H1 (cell line): ENCODE measurements at regions of chr21 and their contacts with region 1.

Region 1: DNA sequence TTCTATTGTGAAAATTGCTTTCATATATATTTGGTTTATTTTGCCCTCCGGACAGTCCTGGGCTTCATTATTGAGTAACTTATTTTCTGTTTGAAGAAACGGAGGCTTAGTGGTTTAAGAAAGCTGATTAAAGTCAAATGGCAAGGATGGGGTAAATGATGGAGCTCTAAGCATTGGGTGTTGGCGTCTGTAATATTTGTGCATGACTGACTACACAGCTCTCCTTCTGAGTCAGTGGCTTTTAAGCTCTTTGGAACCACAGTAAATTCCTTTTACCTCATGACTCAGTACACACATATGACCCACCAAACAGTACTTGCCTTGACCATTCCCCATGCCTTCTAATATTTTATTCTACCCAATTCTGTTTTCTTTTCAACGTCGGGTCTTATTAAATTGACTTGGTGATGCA is 21.0 kb downstream of the B3GALT5 start:
- DNase-seq: no peak
- H3K4me3 ChIP-seq: no peak overlapping the region
- H3K27ac ChIP-seq: no peak overlapping the region
- H3K4me1 ChIP-seq: peaks cover 14 to 38% (median 29%) of the 10 kb centered on the region in 4 experiments
- H3K27me3 ChIP-seq: no peaks in the 10 kb centered on the region
- CTCF ChIP-seq: no peak
- EP300 ChIP-seq: no peak
- POLR2A ChIP-seq: no peak
- RAD21 ChIP-seq: no peak

Region 2: DNA sequence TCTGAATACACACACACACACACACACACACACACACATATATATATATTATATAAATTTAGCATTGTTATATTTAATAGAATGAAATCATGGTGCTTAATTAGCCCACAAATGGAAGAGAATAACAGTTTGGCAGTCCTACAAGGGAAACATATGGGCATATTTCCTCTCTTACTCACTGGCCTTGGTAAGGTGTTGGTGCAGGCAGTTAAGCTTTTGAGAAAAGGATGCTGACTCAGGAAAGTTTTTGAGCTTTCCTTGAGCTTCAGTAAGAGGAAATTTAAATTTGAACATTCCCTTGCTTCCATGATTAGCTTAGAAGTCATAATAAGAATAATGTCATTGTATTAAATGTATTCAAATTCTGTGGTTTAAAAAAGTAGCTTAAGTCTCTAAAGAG is 58.0 kb before region 1 on chr21:
- CTCF ChIA-PET with region 1: no interaction called
- POLR2A ChIA-PET with region 1: no interaction called
- DNase-seq: no peak
- H3K4me3 ChIP-seq: no peak overlapping the region
- H3K27ac ChIP-seq: no peak overlapping the region
- H3K4me1 ChIP-seq: peaks cover 0 to 5% (median 3%) of the 10 kb centered on the region in 4 experiments; a peak in 5 of 7 replicates
- H3K27me3 ChIP-seq: no peaks in the 10 kb centered on the region
- CTCF ChIP-seq: no peak
- EP300 ChIP-seq: no peak
- POLR2A ChIP-seq: no peak
- RAD21 ChIP-seq: no peak

Region 3: DNA sequence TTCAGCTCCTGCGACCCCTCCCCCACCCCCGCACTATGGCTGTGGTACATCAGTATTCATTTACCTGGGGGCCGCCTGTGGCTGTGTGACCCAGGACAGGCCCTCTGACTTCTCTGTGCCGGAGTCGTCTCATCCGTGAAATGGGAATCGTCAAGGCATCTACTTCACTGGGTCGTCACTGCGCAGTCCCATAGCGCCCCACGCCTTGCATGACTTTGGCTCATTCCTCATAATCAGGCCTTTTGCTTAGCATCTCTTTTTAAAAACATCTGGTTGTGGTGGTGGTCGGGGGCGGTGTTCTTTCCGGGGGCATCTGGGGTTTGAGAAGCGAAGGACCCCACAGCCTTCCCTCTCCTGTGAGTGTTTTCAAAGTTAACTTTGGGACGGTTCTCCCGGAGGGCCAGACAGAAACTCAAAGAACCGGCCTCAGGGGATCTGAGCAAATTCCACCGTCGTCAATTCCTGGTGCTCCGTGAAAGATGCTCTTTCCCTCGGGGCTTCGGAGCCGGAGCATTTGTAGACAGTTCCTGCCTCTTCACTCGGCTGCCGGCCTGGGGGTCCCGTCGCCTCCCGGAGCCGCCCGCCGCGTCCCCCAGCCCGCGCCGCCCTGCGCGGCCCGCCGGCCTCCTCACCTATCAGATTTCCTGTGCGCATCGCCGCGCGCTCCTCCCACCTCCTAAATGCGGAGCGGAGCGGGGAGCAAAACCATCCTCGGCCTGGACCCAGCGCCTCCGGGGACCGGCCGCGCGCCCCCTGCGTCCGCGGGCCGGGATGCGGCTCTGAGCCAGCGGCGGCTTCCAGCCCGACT is 21.3 kb before region 1 on chr21 and contains the start of gene B3GALT5:
- CTCF ChIA-PET with region 1: interaction called, 6 read pairs
- POLR2A ChIA-PET with region 1: interaction called, 222 read pairs
- DNase-seq: peak; percentile 33 to 80
- H3K4me3 ChIP-seq: peak within 1 kb of the TSS; percentile 58 to 90 (median 90)
- H3K27ac ChIP-seq: no peak within 1 kb of the TSS; the same call in 1 of the 2 replicates
- H3K4me1 ChIP-seq: peaks cover 10 to 28% (median 16%) of the 10 kb centered on the region in 4 experiments
- H3K27me3 ChIP-seq: no peaks in the 10 kb centered on the region
- CTCF ChIP-seq: peak in 1 of 3 experiments; percentile 32; a peak in 1 of 4 replicates
- EP300 ChIP-seq: no peak
- POLR2A ChIP-seq: no peak; a peak in 1 of 3 replicates
- RAD21 ChIP-seq: peak in 1 of 2 experiments; percentile 33; a peak in 2 of 4 replicates
- total RNA-seq, gene B3GALT5: 23.8 and 25.1 TPM in 2 replicates

Region 4: DNA sequence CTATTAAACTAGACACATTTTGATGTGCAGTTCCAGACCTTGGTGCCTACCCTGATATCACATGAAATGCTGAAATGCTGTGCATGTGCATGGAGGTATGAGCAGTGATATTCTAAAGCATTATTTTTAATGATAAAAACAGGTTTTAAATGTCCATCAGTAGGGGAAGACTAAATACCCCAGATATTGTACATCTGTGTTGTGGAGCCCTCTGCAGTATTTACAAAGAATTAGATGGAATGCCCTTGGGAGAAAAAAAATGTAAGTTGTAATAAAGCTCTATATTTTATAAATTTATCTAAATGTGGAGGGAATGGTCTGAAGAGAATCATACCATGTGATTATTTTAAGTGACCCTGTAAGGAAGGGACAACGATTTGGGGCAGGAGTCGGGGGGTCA is 72.1 kb after region 1 on chr21:
- CTCF ChIA-PET with region 1: no interaction called
- POLR2A ChIA-PET with region 1: no interaction called
- DNase-seq: no peak
- H3K4me3 ChIP-seq: no peak overlapping the region
- H3K27ac ChIP-seq: no peak overlapping the region
- H3K4me1 ChIP-seq: peaks cover 3 to 12% (median 9%) of the 10 kb centered on the region in 4 experiments
- H3K27me3 ChIP-seq: no peaks in the 10 kb centered on the region
- CTCF ChIP-seq: no peak
- EP300 ChIP-seq: no peak
- POLR2A ChIP-seq: no peak
- RAD21 ChIP-seq: no peak